HEK293T (cell line): ENCODE measurements at regions of chr17 and their contacts with region 1.

Region 1: GRCh38 chr17:19642373-19642893 is 6.1 kb upstream of the ALDH3A2 start:
- DNase-seq: no peak

Region 2: GRCh38 chr17:19630661-19631060 is 11.8 kb before region 1 on chr17:
- CTCF ChIA-PET with region 1: interaction called, 10 read pairs
- POLR2A ChIA-PET with region 1: interaction called, 19 read pairs
- DNase-seq: no peak

Region 3: GRCh38 chr17:19686400-19687090 is 44.1 kb after region 1 on chr17:
- CTCF ChIA-PET with region 1: no interaction called
- POLR2A ChIA-PET with region 1: no interaction called
- DNase-seq: no peak